Heart left ventricle (tissue), 16 donors: ENCODE measurements at regions of chr7 and their contacts with region 1.

Region 1: GRCh38 chr7:86932038-86932512 is 127.4 kb downstream of the ELAPOR2 start:
- DNase-seq: peak in 3 of 5 donors; percentile 17 to 41 (median 19)
- ATAC-seq: peak; percentile 87 to 99 (median 96)
- H3K4me3 ChIP-seq: no peak overlapping the region
- H3K27ac ChIP-seq: peak overlapping the region; percentile 1 to 75 (median 48)
- H3K4me1 ChIP-seq: peaks cover 0 to 13% (median 5%) of the 10 kb centered on the region in 12 donors
- H3K27me3 ChIP-seq: no peaks in the 10 kb centered on the region
- CTCF ChIP-seq: no peak
- POLR2A ChIP-seq: peak in 1 of 2 donors; percentile 26

Region 2: GRCh38 chr7:86574006-86574405 is 358.1 kb before region 1 on chr7:
- intact Hi-C with region 1: no loop called
- DNase-seq: no peak
- ATAC-seq: no peak
- H3K4me3 ChIP-seq: no peak overlapping the region
- H3K27ac ChIP-seq: no peak overlapping the region
- H3K4me1 ChIP-seq: no peaks in the 10 kb centered on the region
- H3K27me3 ChIP-seq: no peaks in the 10 kb centered on the region
- CTCF ChIP-seq: no peak
- POLR2A ChIP-seq: no peak

Region 3: DNA sequence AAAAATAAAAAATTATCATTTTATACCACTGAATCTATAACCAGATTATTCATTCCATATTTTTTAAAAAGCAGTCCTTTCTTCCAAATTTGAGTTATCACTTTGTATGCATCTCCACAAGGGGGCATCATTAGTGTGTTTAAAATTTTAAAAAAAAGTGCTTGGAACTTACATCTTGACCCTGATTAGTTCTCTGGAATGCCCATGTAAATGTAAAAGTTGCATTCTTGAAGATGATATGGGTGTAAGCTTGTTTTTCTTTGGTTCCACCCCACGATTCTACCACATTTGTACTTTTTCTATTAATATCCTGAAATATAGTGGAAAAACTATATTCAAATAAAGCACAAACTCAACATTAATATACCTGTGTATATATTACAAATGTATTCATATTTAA is 17.5 kb before region 1 on chr7:
- intact Hi-C with region 1: no loop called
- DNase-seq: no peak
- ATAC-seq: no peak
- H3K4me3 ChIP-seq: no peak overlapping the region
- H3K27ac ChIP-seq: no peak overlapping the region
- H3K4me1 ChIP-seq: peaks cover 0 to 7% (median 0%) of the 10 kb centered on the region in 12 donors
- H3K27me3 ChIP-seq: no peaks in the 10 kb centered on the region
- CTCF ChIP-seq: peak in 11 of 12 donors; percentile 18 to 55 (median 33)
- POLR2A ChIP-seq: no peak

Region 4: DNA sequence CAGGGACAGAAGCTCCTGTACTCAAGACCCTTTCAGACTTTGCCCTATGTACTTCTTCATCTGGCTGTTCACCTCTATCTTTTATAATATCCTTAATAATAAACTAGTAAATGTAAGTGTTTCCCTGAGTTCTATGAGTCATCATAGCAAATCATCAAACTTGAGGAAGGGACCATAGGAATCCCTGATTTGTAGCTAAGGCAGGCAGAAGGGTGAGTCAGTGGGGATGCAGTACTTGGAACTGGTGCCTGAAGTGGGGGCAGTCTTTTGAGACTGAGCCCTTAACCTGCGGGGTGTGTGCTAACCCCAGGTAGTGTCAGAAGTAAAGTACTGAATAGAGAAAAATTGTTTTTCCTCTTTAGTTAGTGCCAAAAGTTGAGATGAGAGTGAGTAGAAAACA is 293.6 kb after region 1 on chr7:
- intact Hi-C with region 1: loop called in 3 of 10 experiments (anchors 5 kb)
- DNase-seq: no peak
- ATAC-seq: no peak
- H3K4me3 ChIP-seq: no peak overlapping the region
- H3K27ac ChIP-seq: no peak overlapping the region
- H3K4me1 ChIP-seq: peaks cover 0 to 6% (median 3%) of the 10 kb centered on the region in 12 donors
- H3K27me3 ChIP-seq: peaks cover 0 to 15% (median 0%) of the 10 kb centered on the region in 9 donors
- CTCF ChIP-seq: no peak
- POLR2A ChIP-seq: no peak